ENCODE measurements at regions of chr15 and their contacts with region 1.

Region 1: GRCh38 chr15:74307827-74308644 is 59.4 kb downstream of the CYP11A1 start:
- DNase-seq: peak; percentile 87
- H3K4me3 ChIP-seq: peak overlapping the region in 1 of 2 experiments; percentile 13; a peak in 1 of 4 replicates
- H3K27ac ChIP-seq: peak overlapping the region in 1 of 2 experiments; percentile 95; a peak in 2 of 4 replicates
- H3K4me1 ChIP-seq: peaks cover 0 to 64% of the 10 kb centered on the region in 2 experiments; a peak in 2 of 4 replicates
- H3K27me3 ChIP-seq: no peaks in the 10 kb centered on the region
- CTCF ChIP-seq: peak; percentile 77
- EP300 ChIP-seq: no peak; a peak in 1 of 4 replicates
- RAD21 ChIP-seq: peak; percentile 90

Region 2: DNA sequence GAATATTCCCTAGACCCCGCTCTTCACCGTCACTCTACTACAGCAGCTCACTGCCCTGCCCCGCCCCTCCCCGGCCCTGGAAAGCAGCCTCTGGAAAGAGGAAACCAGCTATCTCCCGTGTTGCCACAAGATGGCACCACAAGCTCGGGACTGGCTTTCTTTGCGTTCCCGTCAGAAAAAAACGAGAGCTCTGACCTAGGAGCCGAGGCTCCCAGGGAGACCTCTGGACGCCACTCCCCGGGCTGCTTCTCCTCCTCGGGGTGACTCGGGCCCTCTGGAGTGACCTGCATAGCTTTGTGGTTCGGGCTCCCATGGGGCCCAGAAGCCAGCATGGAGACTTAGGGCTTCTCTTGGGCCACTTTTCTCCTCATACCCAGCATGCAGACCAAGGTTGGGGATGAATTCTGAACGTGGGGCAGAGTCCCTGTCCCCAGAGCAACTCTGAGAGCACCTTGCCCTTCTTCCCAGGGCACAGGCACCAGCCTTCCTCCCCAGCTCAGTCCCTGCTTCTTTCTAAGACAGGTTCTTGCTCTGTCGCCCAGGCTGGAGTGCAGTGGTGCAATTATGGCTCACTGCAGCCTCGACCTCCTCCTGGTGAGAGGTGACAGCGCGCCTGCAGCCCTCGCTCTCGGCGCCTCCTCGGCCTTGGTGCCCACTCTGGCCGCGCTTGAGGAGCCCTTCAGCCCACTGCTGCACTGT is 334.9 kb before region 1 on chr15:
- CTCF ChIA-PET with region 1: interaction called, 10 read pairs
- POLR2A ChIA-PET with region 1: no interaction called
- DNase-seq: peak; percentile 93
- H3K4me3 ChIP-seq: peak overlapping the region in 1 of 2 experiments; percentile 50; a peak in 1 of 4 replicates
- H3K27ac ChIP-seq: no peak overlapping the region
- H3K4me1 ChIP-seq: peaks cover 8 to 10% of the 10 kb centered on the region in 2 experiments; a peak in 2 of 4 replicates
- H3K27me3 ChIP-seq: no peaks in the 10 kb centered on the region
- CTCF ChIP-seq: peak; percentile 84
- EP300 ChIP-seq: no peak
- RAD21 ChIP-seq: peak; percentile 97

Region 3: GRCh38 chr15:74132681-74133651 is 175.1 kb before region 1 on chr15:
- CTCF ChIA-PET with region 1: interaction called, 110 read pairs
- POLR2A ChIA-PET with region 1: interaction called, 7 read pairs
- DNase-seq: no peak
- H3K4me3 ChIP-seq: no peak overlapping the region
- H3K27ac ChIP-seq: no peak overlapping the region
- H3K4me1 ChIP-seq: peaks cover 10 to 36% of the 10 kb centered on the region in 2 experiments; a peak in 3 of 4 replicates
- H3K27me3 ChIP-seq: peaks cover 31% of the 10 kb centered on the region
- CTCF ChIP-seq: no peak
- EP300 ChIP-seq: no peak
- RAD21 ChIP-seq: no peak

Region 4: DNA sequence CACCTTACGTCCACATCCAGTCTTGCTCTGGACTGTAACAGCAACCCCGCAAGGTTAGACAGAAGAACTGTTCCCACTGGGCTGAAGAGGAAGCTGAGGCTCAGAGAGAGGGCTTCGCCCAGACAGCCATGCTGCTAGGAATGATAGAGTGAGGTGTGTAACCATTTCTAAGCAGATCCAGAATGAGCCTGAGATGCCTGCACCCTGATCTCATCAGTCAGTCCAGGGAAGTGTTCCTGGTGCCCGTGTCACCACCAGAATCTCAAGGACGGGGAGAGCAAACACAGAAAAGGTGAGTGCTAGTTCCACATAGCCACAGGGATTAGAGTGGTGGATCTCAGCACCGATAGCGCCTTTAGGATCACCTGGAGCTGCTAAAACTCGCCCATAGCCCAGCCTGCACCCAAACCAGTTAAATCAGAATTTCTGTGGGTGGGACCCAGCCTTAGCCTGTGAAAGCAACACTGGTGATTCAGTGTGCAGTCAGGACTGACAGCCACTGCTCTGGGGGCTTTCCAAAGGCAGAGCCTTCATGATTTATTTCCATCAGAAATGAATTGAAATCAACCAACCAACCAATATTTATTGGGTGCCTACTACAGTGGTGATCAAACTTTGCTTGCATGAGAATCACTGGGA is 122.2 kb before region 1 on chr15:
- CTCF ChIA-PET with region 1: interaction called, 17 read pairs
- POLR2A ChIA-PET with region 1: interaction called, 3 read pairs
- DNase-seq: no peak
- H3K4me3 ChIP-seq: no peak overlapping the region
- H3K27ac ChIP-seq: peak overlapping the region in 1 of 2 experiments; percentile 39; a peak in 1 of 4 replicates
- H3K4me1 ChIP-seq: peaks cover 9 to 16% of the 10 kb centered on the region in 2 experiments; a peak in 3 of 4 replicates
- H3K27me3 ChIP-seq: no peaks in the 10 kb centered on the region
- CTCF ChIP-seq: no peak
- EP300 ChIP-seq: no peak
- RAD21 ChIP-seq: no peak

Region 5: GRCh38 chr15:74222240-74223119 is 85.6 kb before region 1 on chr15:
- CTCF ChIA-PET with region 1: interaction called, 35 read pairs
- POLR2A ChIA-PET with region 1: interaction called, 3 read pairs
- DNase-seq: peak; percentile 55
- H3K4me3 ChIP-seq: no peak overlapping the region
- H3K27ac ChIP-seq: peak overlapping the region in 1 of 2 experiments; percentile 100; a peak in 2 of 4 replicates
- H3K4me1 ChIP-seq: peaks cover 27 to 71% of the 10 kb centered on the region in 2 experiments
- H3K27me3 ChIP-seq: no peaks in the 10 kb centered on the region
- CTCF ChIP-seq: no peak
- EP300 ChIP-seq: no peak
- RAD21 ChIP-seq: no peak

Region 6: DNA sequence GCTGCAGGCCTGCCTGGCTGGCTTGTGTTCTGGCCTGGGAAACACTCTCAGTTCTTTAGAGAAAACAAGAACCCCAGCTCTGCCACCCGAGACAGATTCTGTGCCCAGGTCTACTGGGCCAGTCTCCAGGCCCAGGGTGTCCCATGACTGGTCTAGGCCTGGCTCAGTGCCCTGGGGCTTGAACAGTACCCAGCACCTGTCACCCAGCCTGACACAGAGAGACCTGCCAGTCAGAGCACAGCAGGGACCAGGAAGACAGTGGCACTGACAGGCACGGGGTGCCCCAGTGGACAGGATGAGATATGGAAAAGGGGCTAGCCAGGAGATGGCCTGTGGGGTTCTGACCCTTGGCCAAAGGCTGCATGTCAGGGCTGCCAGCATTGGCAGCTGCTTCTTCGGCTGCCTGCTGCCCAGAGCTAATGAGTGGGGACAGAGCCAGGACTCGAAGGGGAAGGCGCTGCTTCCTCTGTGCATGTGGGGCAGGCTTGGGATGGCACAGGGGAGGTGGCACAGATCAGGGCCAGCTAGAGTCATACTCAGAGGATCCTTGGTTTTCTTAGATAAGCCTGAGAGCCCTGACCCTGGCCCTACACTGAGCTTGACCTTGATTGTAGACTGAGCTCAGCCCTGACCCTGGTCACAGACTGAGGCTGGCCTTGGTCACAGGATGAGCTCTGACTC is 56.8 kb before region 1 on chr15:
- CTCF ChIA-PET with region 1: interaction called, 13 read pairs
- POLR2A ChIA-PET with region 1: no interaction called
- DNase-seq: peak; percentile 54
- H3K4me3 ChIP-seq: no peak overlapping the region
- H3K27ac ChIP-seq: peak overlapping the region in 1 of 2 experiments; percentile 94; a peak in 2 of 4 replicates
- H3K4me1 ChIP-seq: peaks cover 6 to 40% of the 10 kb centered on the region in 2 experiments; a peak in 3 of 4 replicates
- H3K27me3 ChIP-seq: no peaks in the 10 kb centered on the region
- CTCF ChIP-seq: no peak
- EP300 ChIP-seq: peak in 1 of 2 experiments; percentile 62; a peak in 2 of 4 replicates
- RAD21 ChIP-seq: peak; percentile 34

Region 7: GRCh38 chr15:74322181-74323076 is 14.4 kb after region 1 on chr15:
- CTCF ChIA-PET with region 1: interaction called, 265 read pairs
- POLR2A ChIA-PET with region 1: interaction called, 3 read pairs
- DNase-seq: peak; percentile 88
- H3K4me3 ChIP-seq: no peak overlapping the region
- H3K27ac ChIP-seq: 0 out of 4 replicates have a peak overlapping the region, but pooled peaks of 1 of the 2 experiments have one; percentile 11
- H3K4me1 ChIP-seq: peaks cover 10 to 39% of the 10 kb centered on the region in 2 experiments; a peak in 3 of 4 replicates
- H3K27me3 ChIP-seq: no peaks in the 10 kb centered on the region
- CTCF ChIP-seq: peak; percentile 88
- EP300 ChIP-seq: no peak
- RAD21 ChIP-seq: peak; percentile 97

Region 8: GRCh38 chr15:74433592-74434262 is 125.7 kb after region 1 on chr15 and contains the start of gene SEMA7A:
- CTCF ChIA-PET with region 1: no interaction called
- POLR2A ChIA-PET with region 1: no interaction called
- DNase-seq: peak; percentile 96
- H3K4me3 ChIP-seq: peak within 1 kb of the TSS; percentile 69 to 72
- H3K27ac ChIP-seq: peak within 1 kb of the TSS in 1 of 2 experiments; percentile 22; a peak in 1 of 4 replicates
- H3K4me1 ChIP-seq: peaks cover 0 to 15% of the 10 kb centered on the region in 2 experiments; a peak in 1 of 4 replicates
- H3K27me3 ChIP-seq: 0 out of 2 replicates have a peak, but pooled peaks cover 4% of the 10 kb centered on the region
- CTCF ChIP-seq: no peak
- EP300 ChIP-seq: no peak
- RAD21 ChIP-seq: no peak
- polyA plus RNA-seq, gene SEMA7A: 0.80 and 1.3 TPM in 2 replicates

Region 9: GRCh38 chr15:74511583-74511982 is 203.5 kb after region 1 on chr15:
- CTCF ChIA-PET with region 1: no interaction called
- POLR2A ChIA-PET with region 1: no interaction called
- DNase-seq: no peak
- H3K4me3 ChIP-seq: no peak overlapping the region
- H3K27ac ChIP-seq: no peak overlapping the region; a peak in 1 of 4 replicates
- H3K4me1 ChIP-seq: no peaks in the 10 kb centered on the region
- H3K27me3 ChIP-seq: no peaks in the 10 kb centered on the region
- CTCF ChIP-seq: no peak
- EP300 ChIP-seq: no peak
- RAD21 ChIP-seq: no peak

Measured in SK-N-SH (cell line).